ENCODE measurements at regions of chr9 and their contacts with region 1.

Region 1: GRCh38 chr9:120842690-120843499 is at the start of gene PSMD5:
- DNase-seq: peak; percentile 86 to 98 (median 95)
- ATAC-seq: peak; percentile 94
- H3K4me3 ChIP-seq: peak within 1 kb of the TSS; percentile 89
- H3K4me3 Mint-ChIP-seq: peak within 1 kb of the TSS; percentile 91 to 99 (median 96)
- H3K27ac ChIP-seq: peak within 1 kb of the TSS; percentile 98
- H3K27ac Mint-ChIP-seq: peak within 1 kb of the TSS; percentile 83 to 99 (median 96)
- H3K4me1 ChIP-seq: peaks cover 34 to 50% of the 10 kb centered on the region in 2 donors
- H3K4me1 Mint-ChIP-seq: peaks cover 53 to 86% (median 79%) of the 10 kb centered on the region in 7 donors
- H3K27me3 ChIP-seq: no peaks in the 10 kb centered on the region
- H3K27me3 Mint-ChIP-seq: no peaks in the 10 kb centered on the region
- total RNA-seq, gene PSMD5: 33.5 to 63.9 (median 44.0) TPM

Region 2: GRCh38 chr9:120755827-120756434 is 87.0 kb before region 1 on chr9:
- CTCF ChIA-PET with region 1: interaction called, 3 read pairs
- POLR2A ChIA-PET with region 1: interaction called, 6 read pairs
- intact Hi-C with region 1: loop called (anchors 1 to 5 kb)
- DNase-seq: peak; percentile 42 to 80 (median 65)
- ATAC-seq: peak; percentile 83
- H3K4me3 ChIP-seq: no peak overlapping the region
- H3K4me3 Mint-ChIP-seq: no peak overlapping the region
- H3K27ac ChIP-seq: peak overlapping the region; percentile 22
- H3K27ac Mint-ChIP-seq: peak overlapping the region in 8 of 9 donors; percentile 5 to 77 (median 42)
- H3K4me1 ChIP-seq: no peaks in the 10 kb centered on the region
- H3K4me1 Mint-ChIP-seq: peaks cover 3 to 16% (median 7%) of the 10 kb centered on the region in 7 donors
- H3K27me3 ChIP-seq: no peaks in the 10 kb centered on the region
- H3K27me3 Mint-ChIP-seq: no peaks in the 10 kb centered on the region

Region 3: DNA sequence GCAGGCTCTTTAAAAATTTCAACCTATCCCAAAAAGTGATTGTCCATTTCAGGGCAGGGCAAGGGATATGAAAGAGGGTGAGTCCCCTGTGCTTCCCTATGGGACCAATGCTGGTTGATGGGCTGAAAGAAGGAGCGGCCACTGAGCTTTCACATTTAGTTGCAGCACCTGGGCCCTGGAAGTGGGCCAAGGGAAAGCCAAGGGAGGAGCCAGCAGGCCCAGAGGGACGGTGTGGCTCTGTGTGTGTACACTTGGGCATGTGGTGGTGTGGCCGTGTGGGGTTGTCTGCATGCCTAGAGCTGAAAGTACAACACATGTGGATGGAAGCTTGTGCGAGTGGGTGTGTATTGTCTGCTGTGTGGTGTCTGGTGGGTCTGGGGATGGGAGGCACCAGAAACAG is 13.8 kb after region 1 on chr9:
- CTCF ChIA-PET with region 1: no interaction called
- POLR2A ChIA-PET with region 1: interaction called, 26 read pairs
- intact Hi-C with region 1: no loop called
- DNase-seq: no peak
- ATAC-seq: no peak
- H3K4me3 ChIP-seq: no peak overlapping the region
- H3K4me3 Mint-ChIP-seq: no peak overlapping the region
- H3K27ac ChIP-seq: no peak overlapping the region
- H3K27ac Mint-ChIP-seq: peak overlapping the region in 2 of 9 donors; percentile 21 to 36
- H3K4me1 ChIP-seq: no peaks in the 10 kb centered on the region
- H3K4me1 Mint-ChIP-seq: peaks cover 4 to 23% (median 18%) of the 10 kb centered on the region in 7 donors
- H3K27me3 ChIP-seq: no peaks in the 10 kb centered on the region
- H3K27me3 Mint-ChIP-seq: no peaks in the 10 kb centered on the region

Region 4: GRCh38 chr9:120892748-120893610 is 50.1 kb after region 1 on chr9:
- CTCF ChIA-PET with region 1: interaction called, 4 read pairs
- POLR2A ChIA-PET with region 1: interaction called, 55 read pairs
- intact Hi-C with region 1: loop called (anchors 1 kb)
- DNase-seq: peak in 7 of 9 donors; percentile 43 to 77 (median 64)
- ATAC-seq: peak; percentile 65
- H3K4me3 ChIP-seq: peak overlapping the region; percentile 17
- H3K4me3 Mint-ChIP-seq: peak overlapping the region; percentile 54 to 85 (median 80)
- H3K27ac ChIP-seq: peak overlapping the region; percentile 90
- H3K27ac Mint-ChIP-seq: peak overlapping the region; percentile 92 to 100 (median 99)
- H3K4me1 ChIP-seq: peaks cover 64 to 91% of the 10 kb centered on the region in 2 donors
- H3K4me1 Mint-ChIP-seq: peaks cover 40 to 88% (median 74%) of the 10 kb centered on the region in 7 donors
- H3K27me3 ChIP-seq: no peaks in the 10 kb centered on the region
- H3K27me3 Mint-ChIP-seq: no peaks in the 10 kb centered on the region

Region 5: GRCh38 chr9:120965344-120966012 is 122.6 kb after region 1 on chr9:
- CTCF ChIA-PET with region 1: no interaction called
- POLR2A ChIA-PET with region 1: no interaction called
- intact Hi-C with region 1: no loop called
- DNase-seq: no peak
- ATAC-seq: no peak
- H3K4me3 ChIP-seq: no peak overlapping the region
- H3K4me3 Mint-ChIP-seq: no peak overlapping the region
- H3K27ac ChIP-seq: no peak overlapping the region
- H3K27ac Mint-ChIP-seq: no peak overlapping the region
- H3K4me1 ChIP-seq: no peaks in the 10 kb centered on the region
- H3K4me1 Mint-ChIP-seq: no peaks in the 10 kb centered on the region
- H3K27me3 ChIP-seq: no peaks in the 10 kb centered on the region
- H3K27me3 Mint-ChIP-seq: peaks cover 0 to 37% (median 0%) of the 10 kb centered on the region in 5 donors

Region 6: GRCh38 chr9:120982836-120983235 is 139.9 kb after region 1 on chr9:
- CTCF ChIA-PET with region 1: interaction called, 3 read pairs
- POLR2A ChIA-PET with region 1: no interaction called
- intact Hi-C with region 1: loop called in 1 of 2 experiments (anchors 5 kb)
- DNase-seq: no peak
- ATAC-seq: no peak
- H3K4me3 ChIP-seq: no peak overlapping the region
- H3K4me3 Mint-ChIP-seq: no peak overlapping the region
- H3K27ac ChIP-seq: no peak overlapping the region
- H3K27ac Mint-ChIP-seq: no peak overlapping the region
- H3K4me1 ChIP-seq: no peaks in the 10 kb centered on the region
- H3K4me1 Mint-ChIP-seq: peaks cover 0 to 10% (median 4%) of the 10 kb centered on the region in 7 donors
- H3K27me3 ChIP-seq: no peaks in the 10 kb centered on the region
- H3K27me3 Mint-ChIP-seq: peaks cover 0 to 30% (median 0%) of the 10 kb centered on the region in 5 donors

Region 7: GRCh38 chr9:121121582-121122087 is 278.7 kb after region 1 on chr9:
- CTCF ChIA-PET with region 1: no interaction called
- POLR2A ChIA-PET with region 1: no interaction called
- intact Hi-C with region 1: loop called in 1 of 2 experiments (anchors 1 kb)
- DNase-seq: peak; percentile 83 to 98 (median 97)
- ATAC-seq: peak; percentile 100
- H3K4me3 ChIP-seq: peak overlapping the region; percentile 87
- H3K4me3 Mint-ChIP-seq: peak overlapping the region; percentile 87 to 96 (median 89)
- H3K27ac ChIP-seq: peak overlapping the region; percentile 88
- H3K27ac Mint-ChIP-seq: peak overlapping the region; percentile 87 to 99 (median 93)
- H3K4me1 ChIP-seq: peaks cover 20 to 26% of the 10 kb centered on the region in 2 donors
- H3K4me1 Mint-ChIP-seq: peaks cover 27 to 63% (median 54%) of the 10 kb centered on the region in 7 donors
- H3K27me3 ChIP-seq: no peaks in the 10 kb centered on the region
- H3K27me3 Mint-ChIP-seq: no peaks in the 10 kb centered on the region

Measured in naive thymus-derived CD4-positive, alpha-beta T cell (primary cell).